ENCODE measurements at regions of chr20 and their contacts with region 1.

Region 1: GRCh38 chr20:3248167-3248992 is 9.4 kb upstream of the SLC4A11 start:
- DNase-seq: no peak
- ATAC-seq: peak; percentile 53
- H3K4me3 ChIP-seq: peak overlapping the region; percentile 20 to 61 (median 35); a peak in 5 of 6 replicates
- H3K27ac ChIP-seq: no peak overlapping the region
- H3K4me1 ChIP-seq: peaks cover 48% of the 10 kb centered on the region
- H3K27me3 ChIP-seq: peaks cover 1 to 11% of the 10 kb centered on the region in 2 experiments; a peak in 2 of 5 replicates
- CTCF ChIP-seq: peak; percentile 69
- EP300 ChIP-seq: no peak
- POLR2A ChIP-seq: no peak
- RAD21 ChIP-seq: no peak; the same call in 1 of the 2 replicates

Region 2: DNA sequence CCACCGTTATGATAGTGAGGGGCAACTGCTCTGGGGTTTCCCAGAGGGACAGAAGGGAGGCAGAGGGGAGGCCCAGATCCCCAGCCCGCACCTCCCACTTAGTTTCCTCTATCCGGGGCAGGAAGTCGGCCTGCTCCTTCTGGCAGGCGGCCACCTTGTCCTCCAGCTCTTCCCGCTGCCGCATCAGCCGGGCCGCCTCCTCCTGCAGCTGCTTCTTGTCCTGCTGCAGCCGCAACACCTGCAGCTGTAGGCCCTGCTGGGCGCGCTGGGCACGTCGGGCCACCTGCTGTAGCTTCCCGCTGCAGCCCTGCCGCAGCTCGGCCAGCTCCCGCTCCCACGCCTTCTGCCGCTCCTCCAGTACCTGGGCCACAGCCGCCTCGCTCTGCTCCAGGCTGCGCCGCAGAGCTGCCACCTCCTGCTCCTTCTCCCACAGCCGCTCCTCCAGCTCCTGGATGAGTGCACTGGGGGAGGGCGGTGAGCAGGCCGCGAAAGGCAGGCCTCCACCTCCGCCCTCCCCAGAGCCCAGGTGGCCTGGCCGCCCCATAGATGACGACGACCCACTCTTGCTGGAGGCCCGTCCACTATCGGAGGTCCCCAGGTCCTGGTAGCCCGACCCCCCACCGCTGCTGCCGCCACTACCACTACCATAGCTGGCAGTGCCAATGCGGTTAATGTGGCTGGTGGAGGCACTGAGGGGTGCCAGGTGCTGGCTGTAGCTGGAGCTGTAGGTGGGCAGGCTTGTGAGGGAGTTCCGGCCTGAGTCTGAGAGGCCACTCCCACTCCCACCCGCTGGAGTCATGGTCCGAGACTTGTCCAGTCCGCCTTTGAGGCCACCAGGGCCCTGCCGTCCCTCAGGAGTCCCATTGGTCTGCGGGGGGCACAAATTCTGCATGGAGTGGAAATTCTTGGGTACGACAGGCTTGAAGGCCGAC is 82.7 kb before region 1 on chr20:
- CTCF ChIA-PET with region 1: no interaction called
- POLR2A ChIA-PET with region 1: no interaction called
- in situ Hi-C with region 1: no loop called
- intact Hi-C with region 1: loop called (anchors 10 kb)
- DNase-seq: no peak
- ATAC-seq: no peak
- H3K4me3 ChIP-seq: no peak overlapping the region
- H3K27ac ChIP-seq: no peak overlapping the region
- H3K4me1 ChIP-seq: peaks cover 68% of the 10 kb centered on the region
- H3K27me3 ChIP-seq: no peaks in the 10 kb centered on the region
- CTCF ChIP-seq: no peak
- EP300 ChIP-seq: no peak
- POLR2A ChIP-seq: no peak
- RAD21 ChIP-seq: no peak

Region 3: GRCh38 chr20:3233131-3233990 is 15.0 kb before region 1 on chr20:
- CTCF ChIA-PET with region 1: interaction called, 6 read pairs
- POLR2A ChIA-PET with region 1: interaction called, 3 read pairs
- in situ Hi-C with region 1: no loop called
- intact Hi-C with region 1: loop called (anchors 1 kb)
- DNase-seq: no peak
- ATAC-seq: no peak
- H3K4me3 ChIP-seq: no peak overlapping the region
- H3K27ac ChIP-seq: no peak overlapping the region
- H3K4me1 ChIP-seq: peaks cover 52% of the 10 kb centered on the region
- H3K27me3 ChIP-seq: peaks cover 0 to 13% of the 10 kb centered on the region in 2 experiments; a peak in 2 of 5 replicates
- CTCF ChIP-seq: no peak
- EP300 ChIP-seq: no peak
- POLR2A ChIP-seq: no peak
- RAD21 ChIP-seq: no peak